ENCODE measurements at regions of chr1 and their contacts with region 1.

Region 1: DNA sequence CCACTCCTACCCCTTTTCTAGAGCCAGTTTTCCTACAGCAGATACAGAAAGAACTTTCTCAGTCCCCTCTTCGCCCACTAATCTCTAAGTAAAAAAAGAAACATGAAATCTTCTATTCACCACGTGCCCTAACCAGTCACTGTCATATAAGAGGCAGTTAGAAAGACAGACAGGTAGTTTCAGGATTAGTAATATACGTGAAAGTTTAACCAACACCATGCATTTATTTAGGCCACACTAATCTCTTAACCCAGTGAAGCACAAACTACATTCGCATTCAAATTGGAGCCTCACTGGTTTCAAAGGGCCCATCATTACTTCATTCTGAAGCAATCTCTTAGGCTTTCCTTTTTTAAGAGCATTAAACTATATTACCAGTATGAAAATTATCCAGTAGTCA is 10.1 kb downstream of the GPATCH2 start:
- DNase-seq: no peak
- H3K4me3 ChIP-seq: no peak overlapping the region
- H3K27ac ChIP-seq: no peak overlapping the region
- H3K4me1 ChIP-seq: no peaks in the 10 kb centered on the region
- H3K27me3 ChIP-seq: no peaks in the 10 kb centered on the region
- CTCF ChIP-seq: no peak
- EP300 ChIP-seq: no peak
- POLR2A ChIP-seq: no peak

Region 2: DNA sequence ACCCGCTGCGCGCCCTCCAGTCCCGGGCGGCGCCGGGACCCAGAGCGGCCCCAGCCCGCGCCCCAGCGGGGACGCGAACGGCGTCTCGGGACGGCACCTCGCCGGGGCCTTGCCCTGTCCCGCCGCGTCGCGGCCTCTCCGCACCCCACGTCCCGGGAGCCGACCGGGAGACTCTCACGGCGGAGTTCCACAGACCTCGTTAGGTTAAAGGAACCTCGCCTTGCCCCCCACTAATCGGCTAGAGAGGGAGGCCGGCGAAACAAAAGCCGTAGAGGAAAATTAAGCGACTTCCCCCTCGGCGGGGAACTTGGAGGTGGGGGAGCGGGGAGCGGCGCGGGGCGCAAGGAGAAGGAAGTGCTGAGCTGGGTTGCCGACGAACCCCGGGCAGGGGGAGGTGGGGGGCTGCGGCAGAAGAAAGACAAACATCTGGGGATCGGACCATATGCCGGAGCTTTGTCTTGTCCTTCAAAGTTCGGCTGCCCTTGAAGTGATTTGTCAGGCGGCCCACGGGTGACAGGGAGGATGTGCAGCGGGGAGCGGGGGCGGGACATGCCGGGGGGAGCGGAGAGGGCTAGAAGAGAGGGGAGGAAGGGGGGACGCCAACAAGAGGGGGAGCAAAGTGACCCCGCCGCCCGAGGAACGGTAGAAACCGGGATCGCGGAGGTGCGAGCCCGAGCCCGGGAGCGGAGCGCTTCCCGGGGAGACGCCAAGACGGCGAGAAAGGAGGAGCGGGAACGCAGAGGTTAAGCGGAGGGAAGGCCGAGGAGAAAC is 544.3 kb after region 1 on chr1:
- in situ Hi-C with region 1: no loop called
- intact Hi-C with region 1: loop called (anchors 5 kb)
- DNase-seq: peak; percentile 7
- H3K4me3 ChIP-seq: peak overlapping the region; percentile 24 to 60 (median 38)
- H3K27ac ChIP-seq: no peak overlapping the region
- H3K4me1 ChIP-seq: peaks cover 0 to 27% (median 23%) of the 10 kb centered on the region in 4 donors
- H3K27me3 ChIP-seq: peaks cover 98% of the 10 kb centered on the region
- CTCF ChIP-seq: no peak
- EP300 ChIP-seq: no peak
- POLR2A ChIP-seq: no peak